ENCODE measurements at regions of chr15 and their contacts with region 1.

Region 1: DNA sequence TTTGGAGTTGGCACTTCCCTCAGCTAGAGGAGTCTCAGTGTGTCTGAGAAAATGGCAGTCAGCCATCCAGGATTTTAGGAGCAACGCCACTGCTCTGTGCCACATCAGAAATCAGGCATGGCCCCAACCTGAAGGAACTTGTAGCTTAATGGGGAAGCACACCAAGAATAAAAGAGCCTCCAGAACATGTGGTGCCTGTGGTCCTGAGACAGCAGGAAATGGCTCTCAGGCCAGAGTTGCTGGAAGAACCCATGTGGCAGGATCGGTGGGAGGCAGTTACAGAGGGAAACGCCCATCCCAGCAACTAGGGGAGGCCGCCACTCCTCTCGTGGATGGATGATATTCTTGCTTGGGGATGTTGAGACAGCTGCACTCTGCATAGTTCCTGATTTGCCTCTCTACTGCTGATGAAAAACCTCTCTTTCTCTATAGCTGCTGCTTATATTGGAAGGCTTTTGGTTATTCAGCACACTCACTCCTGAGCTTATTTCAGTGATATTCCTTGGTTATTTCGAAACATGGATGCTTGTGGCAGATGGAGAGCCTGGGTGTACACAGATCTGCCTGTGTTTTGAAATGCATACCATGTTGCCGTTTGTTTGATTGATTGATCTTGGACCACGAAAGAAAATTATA is 52.4 kb downstream of the KLHL25 start:
- DNase-seq: peak; percentile 59
- H3K4me3 ChIP-seq: no peak overlapping the region
- H3K27ac ChIP-seq: peak overlapping the region; percentile 15
- H3K4me1 ChIP-seq: peaks cover 5% of the 10 kb centered on the region; the same call in 1 of the 2 replicates
- H3K27me3 ChIP-seq: no peaks in the 10 kb centered on the region

Region 2: GRCh38 chr15:85800467-85801123 is 58.3 kb after region 1 on chr15:
- in situ Hi-C with region 1: no loop called
- DNase-seq: peak; percentile 88
- H3K4me3 ChIP-seq: no peak overlapping the region
- H3K27ac ChIP-seq: no peak overlapping the region
- H3K4me1 ChIP-seq: no peaks in the 10 kb centered on the region
- H3K27me3 ChIP-seq: no peaks in the 10 kb centered on the region

Region 3: DNA sequence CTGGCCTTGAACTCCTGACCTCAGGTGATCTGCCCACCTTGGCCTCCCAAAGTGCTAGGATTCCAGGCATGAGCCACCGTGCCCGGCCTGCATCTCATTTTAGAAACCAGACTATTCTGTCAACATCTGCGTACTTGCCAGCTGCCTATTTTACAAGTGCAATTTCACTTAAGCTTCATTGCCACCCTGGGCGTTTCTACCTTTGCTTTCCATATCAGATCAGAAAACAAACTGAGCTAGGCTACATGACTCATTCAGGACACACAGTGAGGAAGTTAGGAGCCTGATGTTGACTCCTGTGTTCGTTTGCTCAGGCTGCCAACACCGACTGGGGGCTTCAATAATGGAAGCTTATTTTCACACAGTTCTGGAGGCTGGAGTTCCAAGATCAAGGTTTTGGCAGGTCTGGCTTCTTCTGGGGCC is 94.7 kb after region 1 on chr15:
- in situ Hi-C with region 1: loop called (anchors 5 kb)
- DNase-seq: no peak
- H3K4me3 ChIP-seq: no peak overlapping the region
- H3K27ac ChIP-seq: no peak overlapping the region
- H3K4me1 ChIP-seq: no peaks in the 10 kb centered on the region
- H3K27me3 ChIP-seq: no peaks in the 10 kb centered on the region